Aorta (tissue), 5 donors: ENCODE measurements at regions of chr1 and their contacts with region 1.

Region 1: GRCh38 chr1:227449051-227449450 is 114.3 kb upstream of the ZNF678 start:
- DNase-seq: no peak
- ATAC-seq: no peak
- H3K4me3 ChIP-seq: no peak overlapping the region
- H3K27ac ChIP-seq: no peak overlapping the region
- H3K4me1 ChIP-seq: no peaks in the 10 kb centered on the region
- H3K27me3 ChIP-seq: no peaks in the 10 kb centered on the region

Region 2: GRCh38 chr1:226903819-226904716 is 545.0 kb before region 1 on chr1:
- intact Hi-C with region 1: loop called in 1 of 2 experiments (anchors 10 kb)
- DNase-seq: peak in 1 of 2 donors; percentile 47
- ATAC-seq: no peak
- H3K4me3 ChIP-seq: no peak overlapping the region
- H3K27ac ChIP-seq: no peak overlapping the region
- H3K4me1 ChIP-seq: no peaks in the 10 kb centered on the region
- H3K27me3 ChIP-seq: no peaks in the 10 kb centered on the region

Region 3: GRCh38 chr1:226912587-226913176 is 536.4 kb before region 1 on chr1:
- intact Hi-C with region 1: loop called (anchors 10 kb)
- DNase-seq: no peak
- ATAC-seq: peak; percentile 61
- H3K4me3 ChIP-seq: no peak overlapping the region
- H3K27ac ChIP-seq: no peak overlapping the region
- H3K4me1 ChIP-seq: no peaks in the 10 kb centered on the region
- H3K27me3 ChIP-seq: no peaks in the 10 kb centered on the region

Region 4: GRCh38 chr1:227058321-227058751 is 390.7 kb before region 1 on chr1:
- intact Hi-C with region 1: loop called in 1 of 2 experiments (anchors 10 kb)
- DNase-seq: no peak
- ATAC-seq: no peak
- H3K4me3 ChIP-seq: no peak overlapping the region
- H3K27ac ChIP-seq: no peak overlapping the region
- H3K4me1 ChIP-seq: no peaks in the 10 kb centered on the region
- H3K27me3 ChIP-seq: no peaks in the 10 kb centered on the region

Region 5: DNA sequence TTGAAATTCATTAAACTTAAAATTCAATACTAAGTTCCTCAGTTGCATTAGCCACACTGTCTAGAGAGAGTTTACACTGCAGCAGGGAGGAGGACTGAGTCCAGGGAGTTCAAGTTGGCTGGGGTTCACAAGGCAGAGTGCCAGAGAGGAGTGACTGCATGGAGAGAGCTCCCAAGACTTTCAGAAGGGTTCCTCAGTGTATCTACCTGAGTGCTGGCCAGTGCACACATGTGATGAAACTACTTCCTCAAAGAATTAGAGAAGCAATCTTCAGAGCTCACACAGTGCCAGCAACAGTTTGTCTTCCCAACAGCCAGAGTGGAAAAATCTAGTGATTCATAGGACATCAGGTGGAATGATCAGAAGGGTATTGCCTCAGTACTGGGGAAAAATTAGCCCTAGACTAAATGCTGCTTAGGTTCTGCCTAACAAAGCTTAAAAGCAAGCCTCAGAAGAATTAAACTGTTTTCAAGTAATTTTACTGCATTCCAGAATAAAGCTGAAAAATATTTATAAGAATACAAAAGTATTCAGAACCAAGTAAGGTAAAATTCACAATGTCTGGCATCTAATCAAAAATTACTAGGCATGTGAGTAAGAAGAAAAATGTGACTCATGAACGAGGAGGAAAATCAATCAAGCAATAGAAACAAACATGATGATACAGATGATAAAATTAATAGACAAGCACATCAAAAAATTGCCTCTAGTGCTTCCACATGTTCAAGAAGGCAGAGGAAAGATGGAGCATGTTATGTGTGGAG is 547.3 kb after region 1 on chr1:
- intact Hi-C with region 1: no loop called
- DNase-seq: no peak
- ATAC-seq: no peak
- H3K4me3 ChIP-seq: no peak overlapping the region
- H3K27ac ChIP-seq: no peak overlapping the region
- H3K4me1 ChIP-seq: no peaks in the 10 kb centered on the region
- H3K27me3 ChIP-seq: no peaks in the 10 kb centered on the region